ENCODE measurements at regions of chr15 and their contacts with region 1.

Region 1: GRCh38 chr15:43939070-43939469 is 112.3 kb downstream of the WDR76 start:
- DNase-seq: peak; percentile 50
- ATAC-seq: no peak
- H3K4me3 Mint-ChIP-seq: no peak overlapping the region
- H3K27ac Mint-ChIP-seq: no peak overlapping the region
- H3K4me1 Mint-ChIP-seq: no peaks in the 10 kb centered on the region
- H3K27me3 Mint-ChIP-seq: peaks cover 11% of the 10 kb centered on the region
- CTCF ChIP-seq: peak; percentile 52

Region 2: GRCh38 chr15:43958861-43959330 is 19.8 kb after region 1 on chr15:
- CTCF ChIA-PET with region 1: no interaction called
- POLR2A ChIA-PET with region 1: no interaction called
- intact Hi-C with region 1: no loop called
- DNase-seq: no peak
- ATAC-seq: no peak
- H3K4me3 Mint-ChIP-seq: no peak overlapping the region
- H3K27ac Mint-ChIP-seq: no peak overlapping the region
- H3K4me1 Mint-ChIP-seq: peaks cover 15% of the 10 kb centered on the region
- H3K27me3 Mint-ChIP-seq: peaks cover 28% of the 10 kb centered on the region
- CTCF ChIP-seq: no peak

Region 3: GRCh38 chr15:44066316-44066740 is 127.3 kb after region 1 on chr15:
- CTCF ChIA-PET with region 1: interaction called, 17 read pairs
- POLR2A ChIA-PET with region 1: no interaction called
- intact Hi-C with region 1: no loop called
- DNase-seq: peak; percentile 79
- ATAC-seq: peak; percentile 68
- H3K4me3 Mint-ChIP-seq: no peak overlapping the region
- H3K27ac Mint-ChIP-seq: no peak overlapping the region
- H3K4me1 Mint-ChIP-seq: peaks cover 5% of the 10 kb centered on the region
- H3K27me3 Mint-ChIP-seq: peaks cover 20% of the 10 kb centered on the region
- CTCF ChIP-seq: peak; percentile 90